Head of caudate nucleus (tissue), 42 donors: ENCODE measurements at regions of chr19 and their contacts with region 1.

Region 1: GRCh38 chr19:19821366-19821951 is at the start of gene ZNF506:
- DNase-seq: peak; percentile 96 to 99 (median 99)

Region 2: GRCh38 chr19:19865739-19866481 is 44.5 kb after region 1 on chr19 and contains the start of gene ZNF253:
- intact Hi-C with region 1: loop called (anchors 5 kb)
- DNase-seq: peak; percentile 94 to 99 (median 98)

Region 3: GRCh38 chr19:19877724-19878123 is 56.3 kb after region 1 on chr19:
- intact Hi-C with region 1: no loop called
- DNase-seq: no peak